ENCODE measurements at regions of chr1 and their contacts with region 1.

Region 1: GRCh38 chr1:79353224-79353623 is 346.7 kb upstream of the ADGRL4 start:
- DNase-seq: peak in 1 of 2 experiments; percentile 32
- H3K4me3 ChIP-seq: no peak overlapping the region
- H3K4me3 Mint-ChIP-seq: no peak overlapping the region
- H3K27ac Mint-ChIP-seq: no peak overlapping the region
- H3K4me1 ChIP-seq: no peaks in the 10 kb centered on the region
- H3K4me1 Mint-ChIP-seq: no peaks in the 10 kb centered on the region
- H3K27me3 ChIP-seq: no peaks in the 10 kb centered on the region
- H3K27me3 Mint-ChIP-seq: peaks cover 4% of the 10 kb centered on the region
- CTCF ChIP-seq: peak; percentile 10 to 40

Region 2: GRCh38 chr1:79259388-79260336 is 93.6 kb before region 1 on chr1:
- CTCF ChIA-PET with region 1: no interaction called
- POLR2A ChIA-PET with region 1: no interaction called
- intact Hi-C with region 1: loop called (anchors 1 kb)
- DNase-seq: no peak
- H3K4me3 ChIP-seq: no peak overlapping the region
- H3K4me3 Mint-ChIP-seq: no peak overlapping the region
- H3K27ac Mint-ChIP-seq: no peak overlapping the region
- H3K4me1 ChIP-seq: no peaks in the 10 kb centered on the region
- H3K4me1 Mint-ChIP-seq: no peaks in the 10 kb centered on the region
- H3K27me3 ChIP-seq: no peaks in the 10 kb centered on the region
- H3K27me3 Mint-ChIP-seq: no peaks in the 10 kb centered on the region
- CTCF ChIP-seq: peak; percentile 13 to 28

Measured in Caco-2 (cell line).